ENCODE measurements at regions of chr15 and their contacts with region 1.

Region 1: DNA sequence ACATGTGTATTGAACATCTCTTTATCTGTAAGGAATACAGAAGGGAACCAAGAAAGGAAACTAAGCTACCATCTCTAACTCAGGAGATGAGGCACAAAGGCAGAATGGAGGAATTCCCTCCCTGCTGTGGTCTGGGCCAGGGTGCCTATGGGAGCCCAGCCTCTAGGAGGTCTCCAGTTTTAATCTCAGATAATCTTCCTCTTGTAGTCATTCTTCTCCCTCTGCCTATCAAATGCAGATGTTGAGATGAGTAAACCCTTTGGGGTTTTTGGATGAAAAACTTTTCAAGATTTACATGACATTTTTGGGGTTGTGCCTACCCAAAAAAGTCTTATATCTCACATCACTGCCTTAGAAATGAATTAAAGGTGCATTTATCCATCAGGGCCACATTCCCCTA is 23.3 kb downstream of the SCG5 start:
- DNase-seq: no peak
- ATAC-seq: no peak
- H3K4me3 ChIP-seq: no peak overlapping the region
- H3K4me3 Mint-ChIP-seq: no peak overlapping the region
- H3K27ac ChIP-seq: no peak overlapping the region
- H3K27ac Mint-ChIP-seq: no peak overlapping the region
- H3K4me1 ChIP-seq: no peaks in the 10 kb centered on the region
- H3K4me1 Mint-ChIP-seq: no peaks in the 10 kb centered on the region
- H3K27me3 ChIP-seq: no peaks in the 10 kb centered on the region
- H3K27me3 Mint-ChIP-seq: no peaks in the 10 kb centered on the region
- CTCF ChIP-seq: no peak

Region 2: GRCh38 chr15:32643907-32644445 is 20.8 kb before region 1 on chr15:
- CTCF ChIA-PET with region 1: interaction called, 29 read pairs
- POLR2A ChIA-PET with region 1: no interaction called
- intact Hi-C with region 1: no loop called
- DNase-seq: no peak
- ATAC-seq: no peak
- H3K4me3 ChIP-seq: no peak overlapping the region
- H3K4me3 Mint-ChIP-seq: no peak overlapping the region
- H3K27ac ChIP-seq: no peak overlapping the region
- H3K27ac Mint-ChIP-seq: no peak overlapping the region
- H3K4me1 ChIP-seq: no peaks in the 10 kb centered on the region
- H3K4me1 Mint-ChIP-seq: no peaks in the 10 kb centered on the region
- H3K27me3 ChIP-seq: no peaks in the 10 kb centered on the region
- H3K27me3 Mint-ChIP-seq: peaks cover 11% of the 10 kb centered on the region
- CTCF ChIP-seq: no peak

Region 3: DNA sequence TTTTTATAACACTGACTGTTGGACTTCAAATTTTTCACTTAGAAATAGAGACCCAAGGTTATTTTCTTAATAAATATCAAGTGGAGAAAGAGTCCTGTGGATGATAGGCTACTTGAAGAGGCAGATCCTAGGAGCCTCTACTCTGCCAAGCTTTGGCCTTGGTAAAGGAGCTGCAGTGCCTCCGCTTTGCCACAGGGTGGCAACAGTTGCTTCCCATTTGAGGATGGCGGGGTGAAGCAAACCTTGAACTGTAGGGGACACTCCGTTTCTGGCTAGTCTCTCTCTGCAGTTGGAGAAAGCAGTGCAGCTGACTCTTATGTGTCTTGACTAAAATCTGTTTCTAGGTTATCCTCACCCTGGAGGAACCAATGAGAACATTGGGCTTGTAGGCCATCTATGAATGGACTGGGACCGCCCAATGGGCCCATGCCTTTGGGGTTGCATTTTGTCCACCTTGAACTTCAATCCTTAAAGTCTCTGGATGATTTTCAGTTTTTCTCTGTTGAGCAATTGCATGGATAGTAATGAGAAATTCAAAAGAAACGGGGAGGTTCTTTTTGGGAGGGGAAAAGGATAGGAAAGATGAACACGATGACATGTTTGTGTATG is 13.5 kb before region 1 on chr15:
- CTCF ChIA-PET with region 1: interaction called, 29 read pairs
- POLR2A ChIA-PET with region 1: no interaction called
- intact Hi-C with region 1: no loop called
- DNase-seq: peak; percentile 57
- ATAC-seq: peak; percentile 89
- H3K4me3 ChIP-seq: no peak overlapping the region
- H3K4me3 Mint-ChIP-seq: no peak overlapping the region
- H3K27ac ChIP-seq: no peak overlapping the region
- H3K27ac Mint-ChIP-seq: no peak overlapping the region
- H3K4me1 ChIP-seq: no peaks in the 10 kb centered on the region
- H3K4me1 Mint-ChIP-seq: no peaks in the 10 kb centered on the region
- H3K27me3 ChIP-seq: no peaks in the 10 kb centered on the region
- H3K27me3 Mint-ChIP-seq: no peaks in the 10 kb centered on the region
- CTCF ChIP-seq: peak; percentile 88

Region 4: GRCh38 chr15:32675466-32675865 is 10.7 kb after region 1 on chr15:
- CTCF ChIA-PET with region 1: no interaction called
- POLR2A ChIA-PET with region 1: no interaction called
- intact Hi-C with region 1: no loop called
- DNase-seq: no peak
- ATAC-seq: no peak
- H3K4me3 ChIP-seq: no peak overlapping the region
- H3K4me3 Mint-ChIP-seq: no peak overlapping the region
- H3K27ac ChIP-seq: no peak overlapping the region
- H3K27ac Mint-ChIP-seq: no peak overlapping the region
- H3K4me1 ChIP-seq: no peaks in the 10 kb centered on the region
- H3K4me1 Mint-ChIP-seq: no peaks in the 10 kb centered on the region
- H3K27me3 ChIP-seq: no peaks in the 10 kb centered on the region
- H3K27me3 Mint-ChIP-seq: no peaks in the 10 kb centered on the region
- CTCF ChIP-seq: no peak

Region 5: DNA sequence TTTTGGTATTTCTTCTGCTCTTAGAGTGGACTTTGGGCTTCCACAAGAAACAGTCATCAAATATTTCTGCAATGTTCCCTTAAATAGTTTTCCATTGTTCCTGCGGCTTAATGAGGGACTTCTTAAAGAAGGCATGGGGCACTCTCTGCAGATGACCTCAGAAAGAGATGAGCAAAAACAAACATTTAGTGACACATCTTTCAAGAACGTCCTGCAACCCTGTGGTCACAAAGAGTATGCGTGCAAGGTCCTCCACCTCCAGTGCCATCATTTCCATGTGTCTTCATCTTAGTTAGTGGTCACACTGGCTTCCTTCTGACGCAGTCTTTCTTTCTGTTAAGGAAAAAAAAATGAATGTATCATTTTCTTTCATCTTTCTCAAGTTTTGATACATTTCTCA is 109.2 kb after region 1 on chr15:
- CTCF ChIA-PET with region 1: no interaction called
- POLR2A ChIA-PET with region 1: no interaction called
- intact Hi-C with region 1: no loop called
- DNase-seq: no peak
- ATAC-seq: no peak
- H3K4me3 ChIP-seq: no peak overlapping the region
- H3K4me3 Mint-ChIP-seq: no peak overlapping the region
- H3K27ac ChIP-seq: no peak overlapping the region
- H3K27ac Mint-ChIP-seq: no peak overlapping the region
- H3K4me1 ChIP-seq: no peaks in the 10 kb centered on the region
- H3K4me1 Mint-ChIP-seq: no peaks in the 10 kb centered on the region
- H3K27me3 ChIP-seq: no peaks in the 10 kb centered on the region
- H3K27me3 Mint-ChIP-seq: peaks cover 8% of the 10 kb centered on the region
- CTCF ChIP-seq: no peak

Region 6: GRCh38 chr15:32899126-32899596 is 234.4 kb after region 1 on chr15:
- CTCF ChIA-PET with region 1: no interaction called
- POLR2A ChIA-PET with region 1: no interaction called
- intact Hi-C with region 1: no loop called
- DNase-seq: peak; percentile 70
- ATAC-seq: peak; percentile 99
- H3K4me3 ChIP-seq: peak overlapping the region in 1 of 5 experiments; percentile 11
- H3K4me3 Mint-ChIP-seq: peak overlapping the region; percentile 42
- H3K27ac ChIP-seq: no peak overlapping the region
- H3K27ac Mint-ChIP-seq: peak overlapping the region; percentile 15
- H3K4me1 ChIP-seq: peaks cover 27% of the 10 kb centered on the region in 2 donors
- H3K4me1 Mint-ChIP-seq: peaks cover 35% of the 10 kb centered on the region
- H3K27me3 ChIP-seq: no peaks in the 10 kb centered on the region
- H3K27me3 Mint-ChIP-seq: peaks cover 14% of the 10 kb centered on the region
- CTCF ChIP-seq: no peak

Region 7: GRCh38 chr15:32956006-32956405 is 291.2 kb after region 1 on chr15:
- CTCF ChIA-PET with region 1: interaction called, 67 read pairs
- POLR2A ChIA-PET with region 1: no interaction called
- intact Hi-C with region 1: loop called (anchors 1 kb)
- DNase-seq: peak; percentile 52
- ATAC-seq: peak; percentile 28
- H3K4me3 ChIP-seq: no peak overlapping the region
- H3K4me3 Mint-ChIP-seq: no peak overlapping the region
- H3K27ac ChIP-seq: no peak overlapping the region
- H3K27ac Mint-ChIP-seq: no peak overlapping the region
- H3K4me1 ChIP-seq: no peaks in the 10 kb centered on the region
- H3K4me1 Mint-ChIP-seq: peaks cover 2% of the 10 kb centered on the region
- H3K27me3 ChIP-seq: peaks cover 0 to 3% (median 0%) of the 10 kb centered on the region in 4 experiments
- H3K27me3 Mint-ChIP-seq: peaks cover 24% of the 10 kb centered on the region
- CTCF ChIP-seq: peak; percentile 62

Region 8: GRCh38 chr15:32994810-32995424 is 330.1 kb after region 1 on chr15:
- CTCF ChIA-PET with region 1: interaction called, 177 read pairs
- POLR2A ChIA-PET with region 1: no interaction called
- intact Hi-C with region 1: loop called (anchors 1 kb)
- DNase-seq: peak; percentile 49
- ATAC-seq: no peak
- H3K4me3 ChIP-seq: no peak overlapping the region
- H3K4me3 Mint-ChIP-seq: no peak overlapping the region
- H3K27ac ChIP-seq: no peak overlapping the region
- H3K27ac Mint-ChIP-seq: no peak overlapping the region
- H3K4me1 ChIP-seq: no peaks in the 10 kb centered on the region
- H3K4me1 Mint-ChIP-seq: no peaks in the 10 kb centered on the region
- H3K27me3 ChIP-seq: no peaks in the 10 kb centered on the region
- H3K27me3 Mint-ChIP-seq: peaks cover 24% of the 10 kb centered on the region
- CTCF ChIP-seq: peak; percentile 74

Region 9: GRCh38 chr15:33132722-33133345 is 468.0 kb after region 1 on chr15:
- CTCF ChIA-PET with region 1: interaction called, 19 read pairs
- POLR2A ChIA-PET with region 1: no interaction called
- intact Hi-C with region 1: no loop called
- DNase-seq: no peak
- ATAC-seq: no peak
- H3K4me3 ChIP-seq: no peak overlapping the region
- H3K4me3 Mint-ChIP-seq: no peak overlapping the region
- H3K27ac ChIP-seq: no peak overlapping the region
- H3K27ac Mint-ChIP-seq: no peak overlapping the region
- H3K4me1 ChIP-seq: no peaks in the 10 kb centered on the region
- H3K4me1 Mint-ChIP-seq: no peaks in the 10 kb centered on the region
- H3K27me3 ChIP-seq: no peaks in the 10 kb centered on the region
- H3K27me3 Mint-ChIP-seq: peaks cover 13% of the 10 kb centered on the region
- CTCF ChIP-seq: no peak

Region 10: DNA sequence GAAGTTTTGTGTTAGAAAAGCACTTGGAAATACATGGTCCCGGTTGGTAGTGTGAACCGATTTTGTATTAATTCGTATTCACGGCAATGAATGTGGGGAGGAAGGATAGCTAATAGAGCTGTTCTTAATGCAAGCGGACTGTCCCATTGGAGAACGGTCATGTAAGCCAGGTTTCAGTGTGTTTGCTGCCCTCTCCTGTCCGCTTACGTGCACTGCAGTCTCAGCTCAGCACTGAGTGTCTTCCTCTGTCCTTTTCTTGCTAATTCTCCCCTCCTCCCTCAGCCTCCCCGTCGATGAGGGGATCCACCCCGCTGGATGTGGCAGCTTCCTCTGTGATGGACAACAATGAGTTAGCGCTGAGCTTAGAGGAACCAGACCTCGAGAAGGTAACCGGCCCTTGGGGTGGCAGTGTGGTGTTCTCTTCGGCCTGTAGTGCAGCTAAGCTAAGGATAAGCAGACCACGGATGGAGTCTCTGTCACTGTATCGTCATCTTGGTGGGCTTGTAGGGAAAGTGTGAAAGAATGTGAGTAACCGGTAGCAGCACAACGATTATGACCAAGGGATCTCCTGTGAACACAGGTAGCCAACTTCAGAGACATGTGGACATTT is 1036.0 kb after region 1 on chr15:
- CTCF ChIA-PET with region 1: interaction called, 29 read pairs
- POLR2A ChIA-PET with region 1: no interaction called
- intact Hi-C with region 1: no loop called
- DNase-seq: peak; percentile 70
- ATAC-seq: peak; percentile 62
- H3K4me3 ChIP-seq: no peak overlapping the region
- H3K4me3 Mint-ChIP-seq: no peak overlapping the region
- H3K27ac ChIP-seq: no peak overlapping the region
- H3K27ac Mint-ChIP-seq: no peak overlapping the region
- H3K4me1 ChIP-seq: no peaks in the 10 kb centered on the region
- H3K4me1 Mint-ChIP-seq: no peaks in the 10 kb centered on the region
- H3K27me3 ChIP-seq: peaks cover 0 to 2% (median 0%) of the 10 kb centered on the region in 4 experiments
- H3K27me3 Mint-ChIP-seq: peaks cover 21% of the 10 kb centered on the region
- CTCF ChIP-seq: peak; percentile 96